Activated CD4-positive, alpha-beta memory T cell treated with anti-CD3 and anti-CD28 coated beads for 36 hours (primary cell): ENCODE measurements at regions of chr3 and their contacts with region 1.

Region 1: DNA sequence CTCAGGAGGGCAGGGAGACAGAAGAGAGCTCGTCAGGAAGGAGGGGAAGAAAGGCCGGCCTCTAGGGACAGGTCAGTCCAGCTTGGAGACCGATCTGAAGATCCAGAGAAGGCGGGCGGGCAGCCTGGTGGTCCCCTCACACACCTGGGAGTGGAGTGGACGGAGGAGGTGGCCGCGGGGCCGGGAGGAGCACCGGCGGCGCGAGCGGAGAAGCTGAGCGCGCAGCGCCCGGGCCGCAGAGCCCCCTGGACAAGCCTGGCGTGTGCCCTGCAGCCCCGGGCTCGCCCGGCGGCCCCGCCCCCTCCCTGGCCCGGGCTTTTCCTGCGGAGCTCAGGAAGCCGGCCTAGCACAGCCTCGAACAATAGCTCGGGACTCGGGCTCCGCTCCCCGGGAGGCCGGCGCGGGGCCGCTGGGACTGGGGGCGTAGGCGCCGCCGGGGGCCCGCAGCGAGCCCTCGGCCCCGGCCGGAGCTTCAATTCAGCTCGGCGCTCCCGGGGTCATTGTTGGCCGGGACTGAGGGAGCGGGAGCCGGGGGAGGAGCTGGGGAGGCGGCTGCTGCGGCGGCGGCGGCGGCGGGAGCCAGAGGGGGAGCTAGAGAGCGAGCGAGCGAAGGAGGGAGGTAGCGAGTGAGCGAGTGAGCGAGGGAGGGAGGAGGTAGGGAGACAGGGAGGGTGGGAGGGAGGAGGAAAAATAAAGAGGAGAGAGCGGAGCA is 40.9 kb upstream of the ROPN1 start:
- DNase-seq: peak; percentile 81
- H3K4me3 Mint-ChIP-seq: peak overlapping the region; percentile 33
- H3K27ac Mint-ChIP-seq: no peak overlapping the region
- H3K4me1 Mint-ChIP-seq: peaks cover 14% of the 10 kb centered on the region
- H3K27me3 Mint-ChIP-seq: peaks cover 43% of the 10 kb centered on the region

Region 2: DNA sequence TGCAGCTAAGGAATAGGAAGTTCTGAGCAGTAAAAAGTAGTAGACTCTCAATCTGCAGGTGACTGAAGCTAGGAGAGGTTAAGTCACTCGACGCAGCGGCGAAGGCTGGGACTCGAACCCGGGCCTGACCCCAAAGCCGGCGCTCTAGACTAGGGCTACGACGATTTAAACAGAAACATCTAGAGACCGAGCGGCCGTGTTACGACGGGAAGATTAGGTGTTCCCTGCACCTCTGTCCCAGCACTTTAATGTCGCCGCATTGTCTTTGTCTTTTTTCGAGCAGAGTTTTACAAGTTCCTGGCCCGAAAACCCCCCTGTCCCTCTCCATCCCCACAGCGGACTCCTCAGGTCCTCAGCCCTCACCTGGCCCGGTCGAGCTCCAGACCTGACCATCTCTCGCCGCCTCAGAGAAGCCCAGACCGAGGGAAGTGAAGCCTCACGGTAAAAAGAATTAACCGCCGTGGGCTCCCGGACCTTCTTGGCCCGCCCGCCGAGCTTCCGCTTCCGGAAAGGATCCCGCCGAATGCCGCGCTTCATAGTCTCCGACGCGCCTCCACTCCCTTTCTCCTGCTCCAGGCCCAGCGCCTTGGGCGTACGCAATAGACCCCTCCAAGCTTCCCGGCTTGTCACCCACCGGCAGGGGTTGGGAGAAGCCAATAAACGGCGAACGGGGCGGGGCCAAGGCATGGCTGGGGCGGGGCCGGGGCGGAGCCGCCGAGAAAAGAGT is 71.9 kb before region 1 on chr3 and contains the start of gene CCDC14:
- CTCF ChIA-PET with region 1: interaction called, 3 read pairs
- POLR2A ChIA-PET with region 1: no interaction called
- intact Hi-C with region 1: loop called (anchors 2 kb)
- DNase-seq: peak; percentile 88
- H3K4me3 Mint-ChIP-seq: peak within 1 kb of the TSS; percentile 97
- H3K27ac Mint-ChIP-seq: peak within 1 kb of the TSS; percentile 82
- H3K4me1 Mint-ChIP-seq: peaks cover 25% of the 10 kb centered on the region
- H3K27me3 Mint-ChIP-seq: peaks cover 4% of the 10 kb centered on the region
- total RNA-seq, gene CCDC14: 32.4 to 39.5 TPM

Region 3: GRCh38 chr3:123993818-123994217 is 39.0 kb before region 1 on chr3:
- CTCF ChIA-PET with region 1: no interaction called
- POLR2A ChIA-PET with region 1: no interaction called
- intact Hi-C with region 1: no loop called
- DNase-seq: no peak
- H3K4me3 Mint-ChIP-seq: no peak overlapping the region
- H3K27ac Mint-ChIP-seq: no peak overlapping the region
- H3K4me1 Mint-ChIP-seq: no peaks in the 10 kb centered on the region
- H3K27me3 Mint-ChIP-seq: peaks cover 34% of the 10 kb centered on the region

Region 4: GRCh38 chr3:124014366-124014942 is 18.4 kb before region 1 on chr3:
- CTCF ChIA-PET with region 1: interaction called, 13 read pairs
- POLR2A ChIA-PET with region 1: no interaction called
- intact Hi-C with region 1: no loop called
- DNase-seq: no peak
- H3K4me3 Mint-ChIP-seq: no peak overlapping the region
- H3K27ac Mint-ChIP-seq: no peak overlapping the region
- H3K4me1 Mint-ChIP-seq: no peaks in the 10 kb centered on the region
- H3K27me3 Mint-ChIP-seq: peaks cover 22% of the 10 kb centered on the region

Region 5: DNA sequence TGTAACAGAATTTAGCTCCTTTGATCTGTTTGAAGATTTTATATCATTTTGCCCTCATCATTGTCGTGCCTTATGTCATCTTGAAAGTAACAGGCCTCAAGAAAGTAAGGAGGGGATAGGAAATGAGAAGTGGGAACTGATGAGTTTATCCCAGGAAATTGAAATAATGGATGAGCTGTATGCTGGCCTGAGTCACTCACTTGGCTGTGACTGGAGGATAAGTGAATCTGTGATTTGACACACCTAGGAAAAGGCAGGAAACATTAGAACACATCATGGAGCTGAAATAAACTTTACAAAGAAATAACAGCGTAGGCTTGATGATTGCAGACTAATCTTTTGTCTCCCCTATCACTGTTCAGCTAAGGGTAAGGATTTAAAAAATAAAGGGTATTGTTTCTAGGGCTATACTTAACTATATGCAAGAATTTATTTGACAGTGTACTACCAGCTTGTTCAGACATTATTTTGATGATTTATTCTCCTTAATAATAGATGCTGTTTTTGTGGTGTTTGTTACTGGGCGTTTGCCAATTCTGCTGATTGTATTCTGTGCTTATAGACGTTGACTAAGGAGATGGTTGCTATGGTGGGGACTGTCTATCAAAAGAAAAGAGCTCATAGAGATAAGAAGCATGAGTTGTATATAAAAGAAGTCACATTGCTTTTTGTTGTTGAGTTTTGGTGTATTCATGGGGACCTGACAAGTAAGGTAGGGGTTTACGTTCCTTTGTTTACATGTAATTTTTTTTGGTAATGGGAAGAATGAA is 64.7 kb after region 1 on chr3:
- CTCF ChIA-PET with region 1: no interaction called
- POLR2A ChIA-PET with region 1: no interaction called
- intact Hi-C with region 1: no loop called
- DNase-seq: no peak
- H3K4me3 Mint-ChIP-seq: no peak overlapping the region
- H3K27ac Mint-ChIP-seq: no peak overlapping the region
- H3K4me1 Mint-ChIP-seq: no peaks in the 10 kb centered on the region
- H3K27me3 Mint-ChIP-seq: peaks cover 1% of the 10 kb centered on the region